PC-3 (cell line): ENCODE measurements at regions of chr9 and their contacts with region 1.

Region 1: DNA sequence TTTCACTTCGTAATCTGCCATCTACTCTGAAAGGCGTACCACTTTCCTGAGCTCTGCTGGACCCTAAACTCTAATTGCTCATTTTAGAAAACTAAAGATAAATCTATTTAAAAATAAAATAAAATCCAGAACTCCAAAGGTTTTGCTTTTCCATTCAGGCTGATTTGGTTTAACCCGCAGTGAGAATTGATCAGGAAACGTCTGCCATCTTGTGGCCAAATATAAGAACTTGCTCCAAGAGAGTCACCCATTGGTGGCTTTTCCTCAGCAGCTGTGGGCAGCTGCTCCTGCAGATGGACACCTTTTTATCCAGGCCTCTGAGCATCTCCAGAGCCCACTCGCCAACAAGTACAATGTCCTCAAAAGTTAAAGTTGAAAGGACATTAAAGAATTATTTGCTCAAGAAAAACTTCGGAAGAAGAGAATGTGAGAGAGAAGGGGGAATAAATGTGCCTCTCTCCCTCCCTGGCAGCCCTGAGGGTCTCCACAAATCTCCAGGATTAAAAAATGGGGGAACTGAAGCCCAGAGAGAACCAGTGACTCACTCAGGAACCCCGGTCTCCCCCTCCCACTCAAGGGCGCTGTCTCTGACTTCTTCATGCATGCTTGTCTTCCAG is 4.1 kb downstream of the SAXO1 start:
- DNase-seq: peak; percentile 69
- ATAC-seq: peak; percentile 71
- H3K4me3 ChIP-seq: no peak overlapping the region
- H3K27ac ChIP-seq: no peak overlapping the region
- H3K4me1 ChIP-seq: no peaks in the 10 kb centered on the region
- H3K27me3 ChIP-seq: no peaks in the 10 kb centered on the region
- CTCF ChIP-seq: peak; percentile 70

Region 2: GRCh38 chr9:18143028-18143745 is 885.8 kb before region 1 on chr9:
- CTCF ChIA-PET with region 1: no interaction called
- POLR2A ChIA-PET with region 1: no interaction called
- intact Hi-C with region 1: loop called (anchors 10 kb)
- DNase-seq: peak; percentile 26
- ATAC-seq: peak; percentile 24; the same call in 1 of the 2 replicates
- H3K4me3 ChIP-seq: no peak overlapping the region
- H3K27ac ChIP-seq: no peak overlapping the region
- H3K4me1 ChIP-seq: no peaks in the 10 kb centered on the region
- H3K27me3 ChIP-seq: peaks cover 13% of the 10 kb centered on the region
- CTCF ChIP-seq: peak; percentile 54